GM12878 (cell line): ENCODE measurements at regions of chr5 and their contacts with region 1.

Region 1: DNA sequence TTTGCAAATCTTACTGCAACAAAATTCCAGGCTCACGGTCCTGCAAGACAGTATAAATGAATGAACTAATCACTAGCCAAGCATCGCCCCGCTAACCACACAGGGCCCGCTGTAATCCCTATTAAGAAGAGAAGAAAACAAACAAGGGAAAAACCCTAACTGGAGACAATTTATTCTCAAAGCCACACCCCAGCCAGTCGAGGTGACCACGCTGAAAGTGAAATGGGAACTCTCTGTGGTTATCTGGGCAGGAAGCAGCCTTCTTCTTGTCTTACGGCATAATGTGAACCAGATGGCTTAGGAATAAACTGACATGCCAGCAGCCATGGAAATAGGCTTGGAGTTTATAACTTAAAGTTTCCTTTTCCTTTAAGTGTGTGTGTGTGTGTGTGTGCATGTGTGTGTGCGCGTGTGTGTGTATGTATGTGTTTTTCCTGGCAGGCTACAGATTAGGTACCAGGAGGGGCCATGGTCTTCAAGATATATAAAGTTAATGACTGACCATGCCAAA is 120.2 kb downstream of the SEMA6A start:
- DNase-seq: peak; percentile 63
- ATAC-seq: peak; percentile 97
- H3K4me3 ChIP-seq: no peak overlapping the region
- H3K27ac ChIP-seq: no peak overlapping the region
- H3K4me1 ChIP-seq: peaks cover 10% of the 10 kb centered on the region
- H3K27me3 ChIP-seq: no peaks in the 10 kb centered on the region
- CTCF ChIP-seq: no peak
- EP300 ChIP-seq: no peak
- POLR2A ChIP-seq: no peak
- RAD21 ChIP-seq: 0 out of 2 replicates have a peak, but pooled peaks have one; percentile 3

Region 2: GRCh38 chr5:116273448-116274207 is 180.8 kb before region 1 on chr5:
- CTCF ChIA-PET with region 1: interaction called, 4 read pairs
- POLR2A ChIA-PET with region 1: no interaction called
- RAD21 ChIA-PET with region 1: no interaction called
- SMC1A ChIA-PET with region 1: interaction called, 5 read pairs
- in situ Hi-C with region 1: no loop called
- intact Hi-C with region 1: loop called (anchors 10 kb)
- DNase-seq: peak; percentile 43
- ATAC-seq: peak; percentile 90
- H3K4me3 ChIP-seq: no peak overlapping the region
- H3K27ac ChIP-seq: no peak overlapping the region
- H3K4me1 ChIP-seq: no peaks in the 10 kb centered on the region
- H3K27me3 ChIP-seq: no peaks in the 10 kb centered on the region
- CTCF ChIP-seq: no peak
- EP300 ChIP-seq: peak; percentile 36 to 68; a peak in 1 of 4 replicates
- POLR2A ChIP-seq: no peak
- RAD21 ChIP-seq: no peak

Region 3: GRCh38 chr5:116374434-116374852 is 80.0 kb before region 1 on chr5:
- CTCF ChIA-PET with region 1: interaction called, 3 read pairs
- POLR2A ChIA-PET with region 1: interaction called, 3 read pairs
- RAD21 ChIA-PET with region 1: interaction called, 5 read pairs
- SMC1A ChIA-PET with region 1: interaction called, 21 read pairs
- in situ Hi-C with region 1: no loop called
- intact Hi-C with region 1: no loop called
- DNase-seq: peak; percentile 64
- ATAC-seq: peak; percentile 82
- H3K4me3 ChIP-seq: no peak overlapping the region
- H3K27ac ChIP-seq: no peak overlapping the region
- H3K4me1 ChIP-seq: peaks cover 7% of the 10 kb centered on the region
- H3K27me3 ChIP-seq: no peaks in the 10 kb centered on the region
- CTCF ChIP-seq: no peak
- EP300 ChIP-seq: 0 out of 4 replicates have a peak, but pooled peaks of 1 of the 2 experiments have one; percentile 22
- POLR2A ChIP-seq: no peak
- RAD21 ChIP-seq: no peak

Region 4: GRCh38 chr5:116442095-116442534 is 12.4 kb before region 1 on chr5:
- CTCF ChIA-PET with region 1: interaction called, 6 read pairs
- POLR2A ChIA-PET with region 1: interaction called, 9 read pairs
- RAD21 ChIA-PET with region 1: interaction called, 14 read pairs
- SMC1A ChIA-PET with region 1: interaction called, 17 read pairs
- in situ Hi-C with region 1: no loop called
- intact Hi-C with region 1: no loop called
- DNase-seq: no peak
- ATAC-seq: no peak
- H3K4me3 ChIP-seq: no peak overlapping the region
- H3K27ac ChIP-seq: no peak overlapping the region
- H3K4me1 ChIP-seq: peaks cover 4% of the 10 kb centered on the region; the same call in 1 of the 2 replicates
- H3K27me3 ChIP-seq: no peaks in the 10 kb centered on the region
- CTCF ChIP-seq: no peak
- EP300 ChIP-seq: no peak
- POLR2A ChIP-seq: no peak
- RAD21 ChIP-seq: no peak

Region 5: GRCh38 chr5:116521173-116521872 is 66.9 kb after region 1 on chr5:
- CTCF ChIA-PET with region 1: no interaction called
- POLR2A ChIA-PET with region 1: no interaction called
- RAD21 ChIA-PET with region 1: no interaction called
- SMC1A ChIA-PET with region 1: no interaction called
- in situ Hi-C with region 1: no loop called
- intact Hi-C with region 1: no loop called
- DNase-seq: no peak
- ATAC-seq: peak; percentile 43
- H3K4me3 ChIP-seq: no peak overlapping the region
- H3K27ac ChIP-seq: no peak overlapping the region
- H3K4me1 ChIP-seq: no peaks in the 10 kb centered on the region
- H3K27me3 ChIP-seq: no peaks in the 10 kb centered on the region
- CTCF ChIP-seq: no peak
- EP300 ChIP-seq: no peak
- POLR2A ChIP-seq: no peak
- RAD21 ChIP-seq: no peak